ENCODE measurements at regions of chr17 and their contacts with region 1.

Region 1: DNA sequence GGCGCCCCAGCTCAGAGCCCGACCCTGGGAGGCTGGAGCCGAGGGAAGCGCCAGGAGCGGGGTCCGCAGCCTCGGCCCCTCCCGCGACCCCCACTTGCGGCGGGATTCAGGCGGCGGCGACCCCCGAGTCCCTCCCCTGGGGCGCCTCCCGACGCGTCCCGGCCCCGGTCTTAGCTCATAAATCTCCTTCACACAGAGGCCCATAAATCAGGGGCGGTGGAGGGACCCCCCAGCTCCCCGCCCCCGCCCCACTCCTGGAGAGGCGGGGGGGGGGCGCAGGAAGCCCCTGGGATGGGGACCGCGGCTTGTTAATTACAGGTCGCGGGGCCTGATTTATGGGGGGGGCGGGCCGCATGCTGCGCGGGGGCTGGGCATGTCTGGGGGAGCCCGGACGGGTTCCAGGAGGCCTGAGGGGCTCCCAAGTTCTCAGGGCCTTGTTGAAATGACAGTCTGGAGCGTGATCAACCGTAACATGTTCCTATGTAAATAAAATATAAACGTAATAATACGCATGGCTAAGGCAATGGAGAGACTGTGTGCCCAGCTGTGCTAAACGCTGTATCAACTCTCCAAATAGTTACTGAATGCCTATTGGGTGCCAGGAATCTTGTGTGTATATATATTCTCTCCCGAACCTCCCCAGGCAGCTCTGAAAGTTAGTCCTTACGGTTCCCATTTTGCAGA is 10.0 kb upstream of the BHLHA9 start:
- DNase-seq: no peak
- H3K27ac ChIP-seq: no peak overlapping the region
- CTCF ChIP-seq: no peak

Region 2: GRCh38 chr17:1043601-1044251 is 216.5 kb before region 1 on chr17:
- CTCF ChIA-PET with region 1: no interaction called
- POLR2A ChIA-PET with region 1: no interaction called
- DNase-seq: no peak
- H3K27ac ChIP-seq: no peak overlapping the region
- CTCF ChIP-seq: no peak

Region 3: GRCh38 chr17:1286379-1287106 is 26.3 kb after region 1 on chr17:
- CTCF ChIA-PET with region 1: no interaction called
- POLR2A ChIA-PET with region 1: no interaction called
- DNase-seq: no peak
- H3K27ac ChIP-seq: no peak overlapping the region
- CTCF ChIP-seq: no peak

Region 4: DNA sequence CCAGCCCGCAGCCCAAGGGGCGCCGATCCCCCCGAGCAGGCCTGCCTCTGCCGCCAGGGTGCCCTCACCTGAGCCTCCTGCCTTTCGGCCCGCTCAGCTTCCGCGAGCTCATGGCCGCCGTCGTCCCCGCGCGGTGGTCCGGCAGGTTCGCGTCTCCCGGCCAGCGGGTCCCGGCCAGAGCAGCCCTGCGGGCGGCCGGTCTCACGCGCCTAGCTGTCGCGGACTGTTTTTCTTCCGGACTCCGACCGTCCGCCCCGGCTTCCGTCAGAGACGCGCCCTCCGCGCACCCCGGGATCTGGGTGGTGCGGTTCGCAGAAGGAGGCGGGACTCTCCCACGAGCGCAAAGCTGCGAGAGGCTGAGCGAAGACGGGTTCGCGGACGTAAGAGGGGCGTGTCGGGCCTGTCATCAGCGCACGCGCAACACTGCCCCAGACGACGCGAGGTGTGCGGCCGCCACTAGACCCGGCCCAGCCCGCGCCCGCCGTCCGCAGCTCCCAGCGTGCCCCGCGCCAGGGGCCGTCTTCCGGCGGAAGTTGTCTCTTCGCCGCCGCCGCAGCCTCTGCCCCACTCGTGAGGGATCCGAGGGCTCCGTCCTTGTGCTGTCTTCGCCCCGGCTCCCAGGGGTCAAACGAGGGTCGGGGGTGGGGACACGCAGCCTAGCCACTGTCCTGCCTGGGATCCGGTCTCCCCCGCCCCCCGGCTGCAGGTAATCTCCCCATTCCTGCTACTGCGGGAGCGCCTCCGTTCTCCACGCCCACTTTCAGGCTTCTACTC is 256.3 kb after region 1 on chr17 and contains the start of gene INPP5K:
- CTCF ChIA-PET with region 1: interaction called, 15 read pairs
- POLR2A ChIA-PET with region 1: no interaction called
- DNase-seq: peak; percentile 98
- H3K27ac ChIP-seq: peak within 1 kb of the TSS; percentile 93
- CTCF ChIP-seq: no peak